Mammary epithelial cell (primary cell): ENCODE measurements at regions of chr4 and their contacts with region 1.

Region 1: GRCh38 chr4:139501927-139502899 is 48.3 kb downstream of the RAB33B start:
- DNase-seq: no peak
- H3K4me3 ChIP-seq: no peak overlapping the region
- H3K27ac ChIP-seq: no peak overlapping the region
- H3K4me1 ChIP-seq: no peaks in the 10 kb centered on the region
- H3K27me3 ChIP-seq: no peaks in the 10 kb centered on the region
- CTCF ChIP-seq: no peak

Region 2: DNA sequence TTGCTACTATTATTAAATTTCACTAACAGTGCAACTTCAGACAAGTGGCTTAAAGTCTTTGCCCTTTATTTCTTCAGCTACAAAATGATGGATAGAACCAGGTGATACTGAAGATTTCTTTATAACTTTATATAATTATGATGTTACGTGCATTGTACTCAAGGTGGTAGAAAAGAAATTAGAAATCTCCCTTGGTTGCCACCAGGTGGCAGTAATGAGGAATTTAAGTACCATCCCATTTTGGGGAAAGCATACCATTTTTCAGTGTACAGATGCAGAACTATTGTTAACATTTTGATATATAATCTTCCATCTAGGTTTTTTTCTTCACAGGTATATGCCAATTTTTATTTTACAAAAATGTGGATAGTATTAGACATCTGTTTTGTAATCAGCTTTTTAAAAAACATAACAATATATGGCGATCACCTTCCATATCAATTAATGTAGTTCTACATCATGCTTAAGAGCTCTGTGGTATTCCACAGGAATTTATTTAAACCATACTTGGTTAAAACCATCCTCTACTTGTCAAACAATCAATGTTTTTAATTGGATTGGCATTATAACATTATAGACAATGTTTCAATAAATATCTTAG is 86.0 kb before region 1 on chr4:
- CTCF ChIA-PET with region 1: no interaction called
- dilution Hi-C with region 1: no loop called
- in situ Hi-C with region 1: no loop called
- intact Hi-C with region 1: loop called (anchors 5 kb)
- DNase-seq: no peak
- H3K4me3 ChIP-seq: no peak overlapping the region
- H3K27ac ChIP-seq: no peak overlapping the region
- H3K4me1 ChIP-seq: peaks cover 20% of the 10 kb centered on the region
- H3K27me3 ChIP-seq: no peaks in the 10 kb centered on the region
- CTCF ChIP-seq: peak; percentile 50 to 60

Region 3: GRCh38 chr4:139460565-139460964 is 41.6 kb before region 1 on chr4:
- CTCF ChIA-PET with region 1: interaction called, 14 read pairs
- dilution Hi-C with region 1: no loop called
- in situ Hi-C with region 1: no loop called
- intact Hi-C with region 1: no loop called
- DNase-seq: no peak
- H3K4me3 ChIP-seq: no peak overlapping the region
- H3K27ac ChIP-seq: no peak overlapping the region
- H3K4me1 ChIP-seq: peaks cover 14% of the 10 kb centered on the region
- H3K27me3 ChIP-seq: no peaks in the 10 kb centered on the region
- CTCF ChIP-seq: no peak